Activated CD4-positive, alpha-beta T cell treated with anti-CD3 and anti-CD28 coated beads, Interleukin-2, amount 10 ng/mL, durations not matched to agents 24 days and 14 days (primary cell): ENCODE measurements at regions of chr5 and their contacts with region 1.

Region 1: DNA sequence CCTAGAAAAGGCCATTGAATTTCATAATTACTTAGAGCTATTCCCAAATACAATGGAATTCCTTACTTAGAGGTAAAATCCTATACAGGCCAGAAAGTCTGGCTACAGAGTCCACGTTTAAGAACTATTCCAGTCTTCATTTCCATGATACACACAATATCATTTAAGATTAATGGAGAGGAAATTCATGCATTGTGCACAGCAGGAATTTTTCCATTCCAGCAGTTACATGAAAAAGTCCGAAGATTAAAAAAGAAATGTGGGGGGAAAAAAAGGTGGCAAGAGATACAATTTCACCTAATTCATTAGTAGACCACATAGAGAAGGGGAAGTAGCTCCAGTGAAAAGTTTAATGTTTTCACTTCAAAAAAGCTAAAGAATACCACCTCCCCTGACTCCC is 63.1 kb downstream of the CHD1 start:
- DNase-seq: no peak
- H3K4me3 Mint-ChIP-seq: no peak overlapping the region
- H3K27ac Mint-ChIP-seq: no peak overlapping the region
- H3K4me1 Mint-ChIP-seq: no peaks in the 10 kb centered on the region
- H3K27me3 Mint-ChIP-seq: no peaks in the 10 kb centered on the region

Region 2: DNA sequence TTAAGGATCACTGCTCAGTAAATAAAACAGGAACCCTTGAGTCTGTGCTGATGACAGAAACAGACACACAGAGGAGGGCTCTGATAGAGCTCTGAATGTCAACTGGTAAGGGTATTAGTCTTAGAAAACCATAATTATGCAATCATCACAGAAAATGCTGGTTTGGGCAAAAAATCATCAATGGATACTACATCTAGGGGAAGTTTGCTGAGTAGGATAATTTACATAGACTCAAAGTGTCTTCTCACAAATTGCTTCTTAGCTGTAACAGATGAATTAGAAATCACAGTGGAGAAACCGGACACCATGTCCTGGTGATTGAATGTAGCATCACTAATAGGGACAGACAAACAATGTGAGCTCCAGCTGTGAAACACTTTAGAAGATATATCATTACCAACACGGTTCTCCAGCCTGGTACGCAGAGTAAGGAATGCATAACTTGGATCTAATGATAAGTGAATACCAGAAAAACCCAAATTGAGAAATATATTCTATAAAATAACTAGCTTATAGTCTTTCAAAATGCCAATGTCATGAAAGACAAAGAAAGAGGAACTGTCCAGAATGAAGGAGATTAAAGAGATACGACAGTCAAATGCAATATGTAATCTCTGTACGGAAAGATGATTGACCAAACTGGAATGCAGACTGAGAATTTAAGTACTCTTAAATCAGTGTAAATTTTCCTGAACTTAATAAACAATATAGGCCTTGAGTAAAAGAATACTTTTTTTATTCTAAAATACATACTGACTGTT is 45.8 kb after region 1 on chr5:
- intact Hi-C with region 1: loop called (anchors 5 kb)
- DNase-seq: no peak
- H3K4me3 Mint-ChIP-seq: no peak overlapping the region
- H3K27ac Mint-ChIP-seq: no peak overlapping the region
- H3K4me1 Mint-ChIP-seq: peaks cover 41% of the 10 kb centered on the region
- H3K27me3 Mint-ChIP-seq: no peaks in the 10 kb centered on the region